Mammary epithelial cell (primary cell): ENCODE measurements at regions of chr12 and their contacts with region 1.

Region 1: DNA sequence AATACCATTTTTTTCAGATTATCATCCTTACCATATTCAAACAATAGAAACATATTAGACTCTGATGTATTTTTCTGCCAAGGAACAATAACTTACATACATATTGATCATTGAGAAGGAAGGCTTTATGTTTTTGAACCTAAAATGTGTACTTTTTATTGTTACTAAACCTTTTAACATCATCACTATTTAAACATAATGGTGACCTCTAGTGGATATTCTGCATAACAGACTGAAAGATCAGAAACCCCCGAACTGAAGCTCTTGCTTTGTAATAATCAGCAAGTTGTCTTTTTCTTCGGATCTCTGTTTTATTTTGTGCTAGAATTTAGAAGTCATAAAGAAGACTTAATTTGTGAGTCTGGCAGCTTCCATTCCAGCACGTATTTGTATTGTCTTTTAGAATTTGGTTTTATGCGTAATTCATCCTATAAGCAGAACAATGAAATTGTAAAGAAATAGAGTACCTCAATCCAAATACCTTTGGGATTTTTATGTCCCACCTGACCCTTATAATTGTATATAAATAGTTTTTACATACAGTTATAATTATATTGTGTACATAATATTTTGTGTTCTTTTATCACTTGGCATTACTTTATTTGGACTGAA is 125.9 kb upstream of the ATF1 start:
- DNase-seq: peak; percentile 45
- H3K4me3 ChIP-seq: no peak overlapping the region
- H3K27ac ChIP-seq: peak overlapping the region; percentile 6
- H3K4me1 ChIP-seq: peaks cover 35% of the 10 kb centered on the region
- H3K27me3 ChIP-seq: no peaks in the 10 kb centered on the region
- CTCF ChIP-seq: peak; percentile 59

Region 2: GRCh38 chr12:50597200-50598195 is 40.5 kb before region 1 on chr12:
- CTCF ChIA-PET with region 1: no interaction called
- dilution Hi-C with region 1: no loop called
- in situ Hi-C with region 1: no loop called
- intact Hi-C with region 1: loop called (anchors 1 kb)
- DNase-seq: peak; percentile 83
- H3K4me3 ChIP-seq: no peak overlapping the region
- H3K27ac ChIP-seq: peak overlapping the region; percentile 62
- H3K4me1 ChIP-seq: peaks cover 13% of the 10 kb centered on the region
- H3K27me3 ChIP-seq: no peaks in the 10 kb centered on the region
- CTCF ChIP-seq: peak in 1 of 2 donors; percentile 19